ENCODE measurements at regions of chr6 and their contacts with region 1.

Region 1: DNA sequence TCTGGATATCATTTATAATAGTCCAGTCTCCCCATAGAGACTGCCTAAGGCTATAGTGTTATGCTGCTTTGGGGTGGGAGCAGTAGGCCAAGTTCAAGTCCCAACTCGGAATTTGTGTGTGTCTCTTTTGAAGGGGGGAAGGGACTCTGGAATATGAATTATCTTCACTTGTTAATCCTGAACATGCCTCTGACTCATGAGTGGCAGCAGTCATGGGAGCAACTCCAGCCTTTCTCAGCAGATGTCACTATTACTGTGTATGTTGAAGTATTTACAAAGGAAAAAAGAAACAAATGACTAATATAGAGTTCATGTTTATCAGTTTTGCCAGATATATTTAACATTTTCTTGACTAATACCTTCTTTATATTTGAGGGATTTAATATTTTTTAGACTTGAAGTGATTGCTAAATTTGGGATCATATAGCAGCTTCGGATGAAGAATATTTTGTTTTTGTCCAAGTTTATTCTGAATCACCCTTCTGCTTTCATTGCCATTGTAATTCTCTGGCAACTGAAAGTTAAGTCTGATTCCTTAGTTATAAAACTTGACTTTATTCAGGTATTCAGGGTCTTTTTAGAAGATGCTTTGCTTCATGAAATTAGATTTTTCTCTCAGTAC is 23.4 kb downstream of the FAM217A start:
- DNase-seq: peak in 1 of 2 donors; percentile 34
- H3K4me3 ChIP-seq: no peak overlapping the region
- CTCF ChIP-seq: no peak
- POLR2A ChIP-seq: no peak

Region 2: GRCh38 chr6:4155848-4156466 is 100.4 kb after region 1 on chr6:
- intact Hi-C with region 1: loop called (anchors 10 kb)
- DNase-seq: peak; percentile 81 to 91
- H3K4me3 ChIP-seq: no peak overlapping the region
- CTCF ChIP-seq: no peak
- POLR2A ChIP-seq: no peak

Region 3: DNA sequence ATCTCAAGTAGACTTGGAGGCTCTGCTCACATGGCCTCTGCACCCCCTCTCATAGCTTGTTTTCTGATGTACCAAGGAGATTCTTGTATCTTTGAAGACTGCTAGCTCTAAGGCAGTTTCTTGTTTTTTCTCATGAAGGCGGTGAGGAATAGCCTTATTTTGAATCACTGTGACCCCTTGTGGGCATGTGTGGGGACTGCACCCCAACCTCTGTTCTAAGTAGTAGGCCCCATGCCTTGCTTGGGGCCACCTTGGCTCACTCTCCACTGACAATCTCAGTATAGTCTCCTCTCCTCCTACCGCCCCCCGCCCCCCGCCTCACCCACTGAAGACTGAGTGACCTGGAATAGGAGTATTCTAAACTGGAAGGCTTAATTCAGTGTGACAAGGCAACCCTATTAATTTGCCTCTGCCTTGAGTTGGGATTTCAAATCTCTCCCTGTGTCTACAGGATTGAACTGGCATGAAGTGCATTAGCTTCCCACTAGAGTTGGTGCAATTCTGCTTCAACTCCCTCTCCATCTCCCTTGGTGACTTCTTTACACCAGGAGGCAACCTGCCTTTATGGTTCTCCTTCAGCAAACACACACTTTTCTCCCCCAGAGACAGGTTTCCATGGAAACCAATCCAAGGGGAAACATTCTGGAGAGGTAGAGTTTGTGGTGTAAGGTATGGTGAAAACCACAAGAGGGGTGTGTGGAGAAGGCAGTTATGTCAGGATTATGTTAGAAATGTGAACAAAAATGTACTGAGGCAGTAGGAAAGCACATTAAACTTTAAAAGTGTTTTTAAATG is 155.3 kb after region 1 on chr6:
- intact Hi-C with region 1: no loop called
- DNase-seq: peak in 1 of 2 donors; percentile 39
- H3K4me3 ChIP-seq: no peak overlapping the region
- CTCF ChIP-seq: no peak
- POLR2A ChIP-seq: no peak

Region 4: GRCh38 chr6:4291453-4292403 is 236.2 kb after region 1 on chr6:
- intact Hi-C with region 1: no loop called
- DNase-seq: no peak
- H3K4me3 ChIP-seq: no peak overlapping the region
- CTCF ChIP-seq: no peak
- POLR2A ChIP-seq: no peak

Region 5: DNA sequence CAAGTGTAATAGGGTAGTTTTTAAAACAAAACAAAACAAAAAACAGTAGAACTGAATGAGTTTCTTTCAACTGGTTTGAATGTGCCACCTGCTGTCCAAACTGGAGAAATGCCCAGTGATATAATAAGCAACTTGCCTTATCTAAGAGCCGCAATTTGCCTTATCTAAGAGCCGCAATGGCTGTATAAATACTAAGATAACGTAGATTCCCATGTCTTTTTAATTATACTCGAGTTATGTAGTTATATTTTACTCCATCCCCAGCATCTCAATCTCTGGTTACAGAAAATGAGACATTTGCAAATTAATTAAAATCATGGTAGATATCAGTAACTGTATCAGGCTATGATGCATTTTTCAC is 881.1 kb after region 1 on chr6:
- intact Hi-C with region 1: loop called (anchors 10 kb)
- DNase-seq: no peak
- H3K4me3 ChIP-seq: no peak overlapping the region
- CTCF ChIP-seq: peak in 1 of 3 donors; percentile 30
- POLR2A ChIP-seq: no peak